ENCODE measurements at regions of chr4 and their contacts with region 1.

Region 1: GRCh38 chr4:42646013-42646784 is 10.7 kb downstream of the ATP8A1 start:
- DNase-seq: no peak
- ATAC-seq: peak; percentile 24
- H3K4me3 ChIP-seq: peak overlapping the region; percentile 3; the same call in 1 of the 2 replicates
- H3K27ac ChIP-seq: peak overlapping the region; percentile 44
- H3K4me1 ChIP-seq: peaks cover 46% of the 10 kb centered on the region
- H3K27me3 ChIP-seq: no peaks in the 10 kb centered on the region
- CTCF ChIP-seq: no peak
- EP300 ChIP-seq: no peak
- POLR2A ChIP-seq: no peak
- RAD21 ChIP-seq: no peak

Region 2: DNA sequence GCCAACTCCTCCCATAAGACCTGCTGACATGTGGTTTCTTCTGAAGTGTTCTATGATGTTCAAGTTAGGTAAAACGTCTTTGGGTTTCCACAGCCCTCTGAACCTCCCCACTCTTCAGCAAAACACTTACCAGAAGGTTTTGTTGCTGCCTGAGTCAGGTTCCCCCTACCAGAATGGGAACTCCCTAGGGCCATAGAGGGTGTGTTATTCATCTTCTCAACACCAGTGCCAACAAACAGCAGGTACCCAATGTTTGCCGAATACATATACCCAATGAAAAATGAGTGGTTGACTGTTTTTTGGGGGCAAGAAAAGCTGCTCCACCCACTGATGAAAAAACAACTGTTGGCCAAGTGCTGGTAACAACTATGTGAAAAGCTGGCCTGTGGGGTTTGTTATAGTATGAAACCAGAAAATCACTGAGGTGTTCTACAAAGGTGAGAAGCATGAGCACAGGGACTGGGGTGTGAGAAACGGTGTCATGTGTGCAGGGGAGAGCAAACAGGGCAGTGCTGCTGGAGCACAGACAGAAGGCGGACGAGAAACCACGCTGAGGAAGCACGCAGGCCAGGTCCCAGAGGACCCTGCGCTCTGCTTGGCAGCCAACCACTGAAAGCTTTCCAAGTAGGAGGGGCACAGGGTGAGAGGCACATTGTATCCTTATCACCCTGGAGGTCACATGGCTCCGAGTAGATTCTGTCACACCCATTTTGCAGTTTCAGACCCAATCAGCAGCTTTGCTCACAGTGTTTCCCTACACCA is 18.1 kb before region 1 on chr4:
- CTCF ChIA-PET with region 1: interaction called, 113 read pairs
- POLR2A ChIA-PET with region 1: interaction called, 254 read pairs
- RAD21 ChIA-PET with region 1: interaction called, 71 read pairs
- SMC1A ChIA-PET with region 1: interaction called, 478 read pairs
- in situ Hi-C with region 1: no loop called
- intact Hi-C with region 1: no loop called
- DNase-seq: peak; percentile 97
- ATAC-seq: peak; percentile 92
- H3K4me3 ChIP-seq: peak overlapping the region; percentile 25; the same call in 1 of the 2 replicates
- H3K27ac ChIP-seq: peak overlapping the region; percentile 79
- H3K4me1 ChIP-seq: peaks cover 30% of the 10 kb centered on the region
- H3K27me3 ChIP-seq: no peaks in the 10 kb centered on the region
- CTCF ChIP-seq: no peak
- EP300 ChIP-seq: peak in 1 of 2 experiments; percentile 82; a peak in 3 of 4 replicates
- POLR2A ChIP-seq: peak; percentile 75
- RAD21 ChIP-seq: peak; percentile 32; the same call in 1 of the 2 replicates

Region 3: DNA sequence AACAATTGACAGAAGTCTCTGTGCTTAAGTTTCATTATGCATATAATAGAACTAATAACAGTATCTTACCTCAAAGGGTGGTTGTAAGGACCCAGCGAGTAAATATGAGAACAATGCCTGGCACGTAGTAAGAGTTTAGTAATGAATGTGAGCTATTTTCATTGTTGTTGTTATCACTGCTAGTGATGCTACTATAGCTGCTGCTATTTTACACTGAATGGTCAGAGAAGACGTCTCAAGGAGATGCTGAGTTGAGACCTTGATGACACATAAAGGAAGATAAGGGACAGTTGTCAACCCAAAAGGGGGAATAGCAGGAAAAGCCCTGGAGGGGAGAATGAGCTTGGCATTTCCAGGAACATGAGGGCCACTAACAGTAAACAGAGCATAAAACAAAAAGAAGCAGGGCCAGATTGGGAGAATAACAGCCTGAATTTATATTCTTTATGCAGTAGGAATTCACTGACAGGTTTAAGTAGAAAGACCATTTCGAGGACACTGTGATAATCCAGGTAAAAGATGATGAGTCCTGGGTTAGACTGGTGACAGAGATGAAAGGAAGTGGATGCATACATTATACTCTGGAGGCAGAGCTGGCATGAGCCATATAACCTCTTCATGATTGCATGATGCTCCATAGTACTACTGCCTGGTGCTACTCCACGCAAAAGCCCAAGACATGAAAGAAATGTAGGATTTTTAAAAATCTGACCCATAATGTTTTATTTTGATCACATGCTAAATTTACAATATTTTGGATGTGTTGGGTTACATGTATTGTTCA is 12.4 kb before region 1 on chr4:
- CTCF ChIA-PET with region 1: interaction called, 113 read pairs
- POLR2A ChIA-PET with region 1: interaction called, 254 read pairs
- RAD21 ChIA-PET with region 1: interaction called, 71 read pairs
- SMC1A ChIA-PET with region 1: interaction called, 478 read pairs
- in situ Hi-C with region 1: no loop called
- intact Hi-C with region 1: no loop called
- DNase-seq: no peak
- ATAC-seq: peak; percentile 73
- H3K4me3 ChIP-seq: 0 out of 2 replicates have a peak overlapping the region, but pooled peaks have one; percentile 8
- H3K27ac ChIP-seq: peak overlapping the region; percentile 49
- H3K4me1 ChIP-seq: peaks cover 54% of the 10 kb centered on the region
- H3K27me3 ChIP-seq: no peaks in the 10 kb centered on the region
- CTCF ChIP-seq: no peak
- EP300 ChIP-seq: peak; percentile 94 to 96
- POLR2A ChIP-seq: no peak
- RAD21 ChIP-seq: no peak

Region 4: DNA sequence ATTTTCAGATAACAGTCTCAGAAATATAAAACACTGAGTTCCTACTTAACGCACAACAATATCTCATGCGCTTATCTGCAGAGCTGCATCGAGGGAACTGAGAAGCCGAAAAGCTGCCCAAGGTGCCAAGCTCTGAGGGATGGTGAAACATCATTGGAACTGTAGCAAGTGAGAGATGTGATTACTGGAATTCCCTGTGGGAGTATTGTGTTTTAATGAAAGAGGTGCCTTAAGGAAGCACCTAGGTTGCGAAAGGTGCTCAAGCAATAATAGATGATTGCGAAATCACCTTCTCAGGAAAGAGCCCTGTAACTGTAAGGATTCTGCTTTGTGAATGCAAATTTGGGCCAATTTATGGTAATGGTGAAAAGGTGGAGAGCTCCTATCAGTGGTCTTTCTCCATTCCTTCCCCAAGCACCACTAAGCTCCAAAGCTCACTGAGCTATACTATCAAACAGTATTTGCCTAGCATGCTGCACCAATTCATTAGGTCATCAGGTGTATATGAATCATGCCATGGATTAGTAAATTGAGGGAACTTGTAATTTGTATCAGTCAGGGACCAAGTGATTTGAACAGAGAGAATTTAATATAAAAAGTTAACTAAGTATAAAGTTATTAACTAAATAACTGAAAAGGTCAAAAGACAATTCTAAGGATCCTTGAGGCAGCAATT is 69.7 kb after region 1 on chr4:
- CTCF ChIA-PET with region 1: no interaction called
- POLR2A ChIA-PET with region 1: no interaction called
- RAD21 ChIA-PET with region 1: no interaction called
- SMC1A ChIA-PET with region 1: no interaction called
- in situ Hi-C with region 1: no loop called
- intact Hi-C with region 1: no loop called
- DNase-seq: no peak
- ATAC-seq: no peak
- H3K4me3 ChIP-seq: no peak overlapping the region
- H3K27ac ChIP-seq: no peak overlapping the region
- H3K4me1 ChIP-seq: no peaks in the 10 kb centered on the region
- H3K27me3 ChIP-seq: no peaks in the 10 kb centered on the region
- CTCF ChIP-seq: no peak
- EP300 ChIP-seq: no peak
- POLR2A ChIP-seq: no peak
- RAD21 ChIP-seq: no peak

Measured in GM12878 (cell line).